KBM-7 (cell line): ENCODE measurements at regions of chr11 and their contacts with region 1.

Region 1: GRCh38 chr11:33687733-33688479 is 12.7 kb downstream of the C11orf91 start:
- DNase-seq: peak; percentile 63

Region 2: DNA sequence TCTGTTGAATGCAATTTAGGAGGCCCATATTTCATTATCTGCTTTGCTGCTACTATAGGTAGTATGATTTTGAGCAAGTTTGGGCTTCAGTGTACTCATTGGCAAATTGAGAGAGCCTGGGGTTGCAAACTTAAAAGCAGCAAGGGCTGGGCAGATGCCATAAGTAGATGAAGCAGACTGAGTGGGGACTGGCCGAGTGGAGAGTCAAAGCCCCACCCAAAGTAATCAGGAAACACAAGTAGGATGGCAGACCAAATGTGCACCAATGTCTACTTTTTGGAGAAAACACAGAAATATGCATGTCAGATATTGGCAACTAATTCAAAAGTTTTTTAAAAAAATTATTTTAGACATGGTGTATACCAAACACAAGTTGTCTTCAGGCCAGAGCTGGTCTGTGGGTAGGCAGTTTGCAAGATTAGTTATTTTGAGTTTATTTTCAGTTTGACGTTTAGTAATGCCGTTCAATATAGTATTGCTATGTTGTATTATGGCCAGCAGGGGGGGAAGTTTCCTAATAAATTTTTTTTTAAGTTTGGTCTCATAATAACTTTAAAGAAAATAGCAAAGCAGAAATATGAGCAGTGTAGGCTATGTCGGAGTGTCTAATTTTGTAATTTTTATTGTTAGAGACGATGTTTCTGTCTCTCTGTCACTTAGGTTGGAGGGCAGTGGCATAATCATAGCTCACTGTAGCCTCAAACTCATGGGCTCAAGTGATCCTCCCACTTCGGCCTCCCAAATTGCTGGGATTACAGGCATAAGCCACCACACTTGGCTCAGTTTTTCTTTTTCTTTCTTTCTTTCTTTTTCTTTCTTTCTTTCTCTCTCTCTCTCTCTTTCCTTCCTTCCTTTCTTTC is 325.6 kb before region 1 on chr11:
- in situ Hi-C with region 1: loop called (anchors 25 kb)
- DNase-seq: peak; percentile 63

Region 3: GRCh38 chr11:33553486-33553885 is 134.4 kb before region 1 on chr11:
- in situ Hi-C with region 1: no loop called
- DNase-seq: no peak

Region 4: DNA sequence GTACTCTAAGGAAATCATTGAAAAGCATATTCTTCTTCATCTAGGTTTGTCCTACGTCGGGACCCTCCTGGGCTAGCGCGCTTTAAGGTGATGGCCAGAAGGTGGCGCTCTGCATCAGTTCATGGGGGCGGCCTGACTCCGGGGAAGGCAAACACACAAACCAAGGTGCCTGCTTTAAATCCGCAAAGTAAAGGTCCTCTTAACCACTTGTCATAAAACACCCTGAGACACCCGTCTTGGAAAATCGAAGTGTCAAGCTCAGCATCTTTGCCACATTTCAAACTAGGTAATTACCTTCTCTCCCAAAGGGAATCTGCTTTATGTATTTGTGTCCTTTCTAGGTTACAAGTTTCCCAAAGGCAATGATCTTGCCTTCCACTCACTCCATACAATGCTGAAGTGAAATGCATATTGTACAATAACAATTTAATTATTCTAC is 170.0 kb after region 1 on chr11:
- in situ Hi-C with region 1: no loop called
- DNase-seq: peak; percentile 89